ENCODE measurements at regions of chr9 and their contacts with region 1.

Region 1: GRCh38 chr9:6049798-6050197 is 34.4 kb upstream of the RANBP6 start:
- DNase-seq: peak; percentile 48
- ATAC-seq: peak; percentile 84
- H3K4me3 ChIP-seq: no peak overlapping the region
- H3K27ac ChIP-seq: no peak overlapping the region
- H3K4me1 ChIP-seq: peaks cover 24% of the 10 kb centered on the region
- H3K27me3 ChIP-seq: no peaks in the 10 kb centered on the region
- CTCF ChIP-seq: peak; percentile 26 to 66 (median 57)
- EP300 ChIP-seq: no peak
- POLR2A ChIP-seq: no peak
- RAD21 ChIP-seq: peak; percentile 35; the same call in 1 of the 2 replicates

Region 2: GRCh38 chr9:5976674-5977397 is 73.0 kb before region 1 on chr9:
- CTCF ChIA-PET with region 1: interaction called, 35 read pairs
- POLR2A ChIA-PET with region 1: no interaction called
- RAD21 ChIA-PET with region 1: interaction called, 18 read pairs
- SMC1A ChIA-PET with region 1: interaction called, 20 read pairs
- in situ Hi-C with region 1: no loop called
- intact Hi-C with region 1: no loop called
- DNase-seq: peak; percentile 11
- ATAC-seq: peak; percentile 88
- H3K4me3 ChIP-seq: no peak overlapping the region
- H3K27ac ChIP-seq: peak overlapping the region; percentile 57
- H3K4me1 ChIP-seq: peaks cover 4% of the 10 kb centered on the region; the same call in 1 of the 2 replicates
- H3K27me3 ChIP-seq: no peaks in the 10 kb centered on the region
- CTCF ChIP-seq: peak; percentile 32 to 68 (median 36); a peak in 4 of 6 replicates
- EP300 ChIP-seq: no peak
- POLR2A ChIP-seq: no peak
- RAD21 ChIP-seq: peak; percentile 70

Region 3: GRCh38 chr9:6008169-6008979 is 41.4 kb before region 1 on chr9:
- CTCF ChIA-PET with region 1: interaction called, 11 read pairs
- POLR2A ChIA-PET with region 1: no interaction called
- RAD21 ChIA-PET with region 1: interaction called, 26 read pairs
- SMC1A ChIA-PET with region 1: interaction called, 6 read pairs
- in situ Hi-C with region 1: no loop called
- intact Hi-C with region 1: no loop called
- DNase-seq: peak; percentile 88
- ATAC-seq: peak; percentile 74
- H3K4me3 ChIP-seq: peak overlapping the region; percentile 82
- H3K27ac ChIP-seq: peak overlapping the region; percentile 66
- H3K4me1 ChIP-seq: peaks cover 12% of the 10 kb centered on the region
- H3K27me3 ChIP-seq: no peaks in the 10 kb centered on the region
- CTCF ChIP-seq: no peak
- EP300 ChIP-seq: no peak
- POLR2A ChIP-seq: peak; percentile 55
- RAD21 ChIP-seq: no peak

Region 4: DNA sequence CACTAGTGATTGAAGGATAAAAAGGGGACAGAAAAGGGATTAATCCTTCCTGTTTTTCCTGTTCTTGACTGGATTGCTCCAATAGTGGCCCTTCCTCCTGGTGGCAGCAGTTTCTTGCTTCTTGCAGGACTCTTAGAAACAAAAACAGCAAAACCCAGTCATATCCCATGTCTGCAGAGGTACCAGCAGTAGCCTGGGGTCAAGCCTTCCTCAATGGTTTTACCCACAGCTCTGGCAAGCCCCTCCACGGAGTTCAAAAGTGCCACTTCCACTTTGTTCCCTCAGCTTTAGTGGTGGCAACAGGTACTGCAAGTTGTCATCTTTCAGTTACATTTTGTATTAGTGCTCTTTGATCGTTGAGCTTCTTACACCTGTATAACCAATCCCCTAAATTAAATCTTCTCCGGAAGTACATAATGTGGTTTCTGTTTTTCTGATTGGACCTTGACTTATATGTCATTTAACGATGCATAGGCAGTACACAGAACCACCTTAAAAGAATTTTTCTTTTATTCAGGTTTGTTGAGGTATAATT is 25.7 kb before region 1 on chr9:
- CTCF ChIA-PET with region 1: interaction called, 33 read pairs
- POLR2A ChIA-PET with region 1: interaction called, 3 read pairs
- RAD21 ChIA-PET with region 1: interaction called, 11 read pairs
- SMC1A ChIA-PET with region 1: interaction called, 4 read pairs
- in situ Hi-C with region 1: no loop called
- intact Hi-C with region 1: no loop called
- DNase-seq: no peak
- ATAC-seq: peak; percentile 99
- H3K4me3 ChIP-seq: no peak overlapping the region
- H3K27ac ChIP-seq: no peak overlapping the region
- H3K4me1 ChIP-seq: no peaks in the 10 kb centered on the region
- H3K27me3 ChIP-seq: no peaks in the 10 kb centered on the region; a peak in 1 of 4 replicates
- CTCF ChIP-seq: peak; percentile 28 to 69 (median 61); a peak in 5 of 6 replicates
- EP300 ChIP-seq: no peak
- POLR2A ChIP-seq: no peak
- RAD21 ChIP-seq: no peak

Region 5: DNA sequence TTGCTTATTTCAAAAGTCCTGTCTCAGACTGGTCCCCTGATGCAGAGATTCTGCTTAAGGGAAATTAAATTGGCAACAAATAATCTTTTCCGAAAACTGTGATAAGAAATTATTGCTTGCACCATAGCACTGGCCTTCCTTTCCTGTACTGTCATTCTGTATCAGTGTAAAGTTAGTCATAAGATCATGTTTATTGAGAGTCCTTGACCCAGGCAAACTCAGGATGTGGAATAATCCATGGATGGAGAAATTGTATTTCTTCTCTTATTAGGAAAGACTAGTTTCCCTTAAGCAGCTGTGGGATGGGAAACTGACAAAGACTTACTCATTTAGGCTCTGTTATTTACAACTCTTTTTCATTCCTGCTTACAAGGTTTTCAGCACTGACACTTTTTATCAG is 48.6 kb after region 1 on chr9:
- CTCF ChIA-PET with region 1: no interaction called
- POLR2A ChIA-PET with region 1: no interaction called
- RAD21 ChIA-PET with region 1: no interaction called
- SMC1A ChIA-PET with region 1: no interaction called
- in situ Hi-C with region 1: no loop called
- intact Hi-C with region 1: no loop called
- DNase-seq: no peak
- ATAC-seq: no peak
- H3K4me3 ChIP-seq: no peak overlapping the region
- H3K27ac ChIP-seq: no peak overlapping the region
- H3K4me1 ChIP-seq: no peaks in the 10 kb centered on the region
- H3K27me3 ChIP-seq: no peaks in the 10 kb centered on the region
- CTCF ChIP-seq: no peak
- EP300 ChIP-seq: no peak
- POLR2A ChIP-seq: no peak
- RAD21 ChIP-seq: no peak

Region 6: DNA sequence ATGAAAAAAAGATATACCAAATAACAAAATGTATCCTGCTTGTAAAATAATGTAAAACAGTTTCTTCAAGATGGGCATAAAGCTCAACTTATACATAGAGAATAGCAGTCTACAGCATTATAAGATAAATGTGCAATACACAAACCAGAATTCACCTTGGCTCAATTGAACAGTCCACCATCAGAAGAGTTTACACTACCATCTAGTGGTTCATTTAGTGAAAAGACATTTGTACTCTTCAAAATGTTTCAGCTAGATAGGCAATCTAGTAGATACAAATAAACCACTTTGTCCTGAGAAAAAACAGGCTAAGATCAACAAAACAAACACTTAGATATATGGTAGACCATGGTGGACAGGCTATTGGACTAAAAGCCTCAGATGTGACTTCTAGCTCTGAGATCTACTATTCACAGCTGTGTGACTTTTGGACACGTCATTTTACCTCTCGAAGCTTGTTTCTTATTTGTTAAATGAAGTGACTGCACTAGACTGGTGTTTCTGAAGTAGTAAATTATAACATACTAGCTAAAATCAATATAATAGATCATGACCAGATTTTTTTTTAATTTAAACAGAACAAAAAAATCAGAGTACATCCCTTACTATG is 256.3 kb after region 1 on chr9:
- CTCF ChIA-PET with region 1: interaction called, 142 read pairs
- POLR2A ChIA-PET with region 1: no interaction called
- RAD21 ChIA-PET with region 1: interaction called, 91 read pairs
- SMC1A ChIA-PET with region 1: interaction called, 62 read pairs
- in situ Hi-C with region 1: loop called (anchors 5 kb)
- intact Hi-C with region 1: no loop called
- DNase-seq: peak; percentile 23
- ATAC-seq: peak; percentile 80
- H3K4me3 ChIP-seq: no peak overlapping the region
- H3K27ac ChIP-seq: no peak overlapping the region
- H3K4me1 ChIP-seq: peaks cover 3% of the 10 kb centered on the region; the same call in 1 of the 2 replicates
- H3K27me3 ChIP-seq: no peaks in the 10 kb centered on the region
- CTCF ChIP-seq: peak; percentile 43 to 69 (median 52); a peak in 5 of 6 replicates
- EP300 ChIP-seq: no peak
- POLR2A ChIP-seq: no peak
- RAD21 ChIP-seq: peak; percentile 92